ENCODE measurements at regions of chr22 and their contacts with region 1.

Region 1: DNA sequence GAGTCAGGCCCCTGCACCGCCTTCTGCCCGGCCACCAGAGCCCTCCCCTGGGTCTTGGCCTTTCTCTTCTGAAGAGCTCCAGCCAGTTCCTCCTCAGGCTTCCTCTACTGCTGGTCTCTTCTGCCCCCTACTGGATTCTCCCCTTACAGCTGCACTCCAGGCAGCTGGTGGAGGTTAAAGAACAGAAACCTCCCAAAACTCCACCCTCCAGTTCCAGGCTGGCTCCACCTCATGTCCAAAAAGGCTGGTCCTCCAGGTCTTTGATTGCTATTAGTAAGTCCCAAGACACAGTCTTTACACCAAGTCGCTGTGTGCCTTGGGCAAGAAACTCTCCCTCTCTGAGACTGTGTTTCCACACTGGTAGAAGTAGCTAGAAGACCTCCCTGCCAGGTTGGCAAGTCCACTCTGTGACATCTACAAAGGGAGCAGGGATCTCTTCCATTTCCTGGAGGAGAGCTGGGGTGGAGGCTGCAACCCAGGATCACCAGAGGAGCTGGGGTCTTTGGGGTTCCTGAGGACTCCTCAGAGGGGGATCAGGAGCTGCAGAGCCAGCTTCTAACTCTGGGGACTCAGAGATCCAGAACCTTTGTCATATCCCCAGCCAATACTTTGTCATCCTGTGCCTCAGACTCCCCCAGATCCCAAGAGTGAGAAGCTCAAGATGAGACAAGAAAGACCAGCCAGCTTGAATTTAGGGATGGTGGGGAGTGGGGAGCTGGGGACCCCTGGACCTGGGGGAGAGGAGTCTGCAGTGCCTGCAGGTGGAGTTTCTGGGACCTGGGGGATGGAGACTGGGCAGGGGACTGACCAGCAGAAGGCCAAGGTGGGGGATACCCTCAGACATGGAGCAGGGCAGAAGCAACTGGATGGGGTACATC is 3.4 kb upstream of the IGLL5 start:
- DNase-seq: peak; percentile 79
- ATAC-seq: peak; percentile 56
- H3K4me3 Mint-ChIP-seq: no peak overlapping the region
- H3K27ac Mint-ChIP-seq: no peak overlapping the region
- H3K4me1 Mint-ChIP-seq: peaks cover 12% of the 10 kb centered on the region
- H3K27me3 Mint-ChIP-seq: peaks cover 7% of the 10 kb centered on the region

Region 2: GRCh38 chr22:22463855-22464540 is 420.3 kb before region 1 on chr22:
- CTCF ChIA-PET with region 1: no interaction called
- POLR2A ChIA-PET with region 1: no interaction called
- intact Hi-C with region 1: loop called in 1 of 2 experiments (anchors 5 kb)
- DNase-seq: peak; percentile 71
- ATAC-seq: no peak
- H3K4me3 Mint-ChIP-seq: no peak overlapping the region
- H3K27ac Mint-ChIP-seq: no peak overlapping the region
- H3K4me1 Mint-ChIP-seq: no peaks in the 10 kb centered on the region
- H3K27me3 Mint-ChIP-seq: peaks cover 33% of the 10 kb centered on the region

Region 3: GRCh38 chr22:22753526-22754267 is 130.6 kb before region 1 on chr22:
- CTCF ChIA-PET with region 1: interaction called, 33 read pairs
- POLR2A ChIA-PET with region 1: no interaction called
- intact Hi-C with region 1: loop called in 1 of 2 experiments (anchors 1 kb)
- DNase-seq: peak; percentile 89
- ATAC-seq: peak; percentile 99
- H3K4me3 Mint-ChIP-seq: no peak overlapping the region
- H3K27ac Mint-ChIP-seq: peak overlapping the region; percentile 58
- H3K4me1 Mint-ChIP-seq: peaks cover 34% of the 10 kb centered on the region
- H3K27me3 Mint-ChIP-seq: no peaks in the 10 kb centered on the region

Region 4: DNA sequence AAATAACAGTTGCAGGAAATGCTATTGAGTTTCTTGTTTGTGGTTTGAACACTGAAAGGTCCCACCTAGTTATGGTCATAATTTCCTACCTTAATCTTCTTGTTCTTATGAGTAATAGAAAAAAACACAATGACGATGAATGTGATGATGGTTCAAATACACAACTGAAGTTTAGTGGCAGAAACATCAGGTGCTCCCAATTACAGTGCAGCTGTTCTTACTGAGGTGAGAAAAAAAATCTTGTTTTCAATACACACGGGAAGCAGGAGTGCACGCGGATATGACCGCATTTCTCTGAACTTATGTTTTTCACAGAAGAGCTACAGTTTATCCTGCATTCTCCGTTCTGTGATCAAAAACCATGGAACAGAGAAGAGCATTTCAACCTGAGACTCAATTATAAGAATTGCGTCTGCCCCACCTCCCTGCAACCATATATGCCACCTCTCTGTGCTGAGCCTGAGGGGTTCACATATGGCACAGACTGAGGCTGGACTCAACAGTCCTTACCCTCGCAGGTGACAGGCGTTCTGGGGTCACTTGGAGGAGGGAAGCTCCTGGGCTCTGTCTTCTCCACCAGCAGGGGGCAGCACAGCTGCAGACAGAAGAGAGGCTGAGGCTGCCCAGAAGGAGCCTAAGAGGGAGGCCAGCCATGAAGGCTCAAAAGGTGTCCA is 96.3 kb before region 1 on chr22:
- CTCF ChIA-PET with region 1: interaction called, 56 read pairs
- POLR2A ChIA-PET with region 1: no interaction called
- intact Hi-C with region 1: loop called (anchors 1 to 5 kb)
- DNase-seq: peak; percentile 83
- ATAC-seq: peak; percentile 88
- H3K4me3 Mint-ChIP-seq: no peak overlapping the region
- H3K27ac Mint-ChIP-seq: no peak overlapping the region
- H3K4me1 Mint-ChIP-seq: peaks cover 44% of the 10 kb centered on the region
- H3K27me3 Mint-ChIP-seq: no peaks in the 10 kb centered on the region

Region 5: DNA sequence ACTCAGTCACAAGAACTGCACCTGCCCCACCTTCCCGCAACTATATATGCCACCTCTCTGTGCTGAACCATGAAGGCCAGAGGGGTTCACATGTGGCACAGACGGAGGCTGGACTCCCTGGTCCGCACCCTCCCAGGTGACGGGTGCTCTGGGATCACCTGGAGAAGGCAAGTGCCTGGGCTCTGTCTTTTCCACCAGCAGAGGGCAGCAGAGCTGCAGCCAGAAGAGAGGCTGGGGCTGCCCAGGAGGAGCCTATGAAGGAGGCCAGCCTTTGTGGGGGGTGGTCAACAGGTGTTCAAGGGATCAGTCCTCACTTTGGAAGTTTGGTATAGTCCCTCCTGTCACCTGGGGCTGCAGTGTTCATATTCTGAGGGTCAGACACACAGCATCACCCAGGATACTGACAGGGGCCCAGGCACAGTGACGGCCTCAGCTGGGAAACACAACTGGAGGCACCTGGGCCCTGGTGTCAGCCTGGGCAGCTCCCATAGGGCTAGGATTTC is 35.8 kb before region 1 on chr22:
- CTCF ChIA-PET with region 1: interaction called, 41 read pairs
- POLR2A ChIA-PET with region 1: no interaction called
- intact Hi-C with region 1: loop called in 1 of 2 experiments (anchors 1 kb)
- DNase-seq: peak; percentile 85
- ATAC-seq: peak; percentile 92
- H3K4me3 Mint-ChIP-seq: no peak overlapping the region
- H3K27ac Mint-ChIP-seq: no peak overlapping the region
- H3K4me1 Mint-ChIP-seq: peaks cover 34% of the 10 kb centered on the region
- H3K27me3 Mint-ChIP-seq: no peaks in the 10 kb centered on the region

Region 6: GRCh38 chr22:22865311-22866072 is 18.8 kb before region 1 on chr22:
- CTCF ChIA-PET with region 1: interaction called, 13 read pairs
- POLR2A ChIA-PET with region 1: no interaction called
- intact Hi-C with region 1: no loop called
- DNase-seq: peak; percentile 66
- ATAC-seq: peak; percentile 80
- H3K4me3 Mint-ChIP-seq: no peak overlapping the region
- H3K27ac Mint-ChIP-seq: no peak overlapping the region
- H3K4me1 Mint-ChIP-seq: peaks cover 37% of the 10 kb centered on the region
- H3K27me3 Mint-ChIP-seq: no peaks in the 10 kb centered on the region